HepG2 (cell line): ENCODE measurements at regions of chr4 and their contacts with region 1.

Region 1: DNA sequence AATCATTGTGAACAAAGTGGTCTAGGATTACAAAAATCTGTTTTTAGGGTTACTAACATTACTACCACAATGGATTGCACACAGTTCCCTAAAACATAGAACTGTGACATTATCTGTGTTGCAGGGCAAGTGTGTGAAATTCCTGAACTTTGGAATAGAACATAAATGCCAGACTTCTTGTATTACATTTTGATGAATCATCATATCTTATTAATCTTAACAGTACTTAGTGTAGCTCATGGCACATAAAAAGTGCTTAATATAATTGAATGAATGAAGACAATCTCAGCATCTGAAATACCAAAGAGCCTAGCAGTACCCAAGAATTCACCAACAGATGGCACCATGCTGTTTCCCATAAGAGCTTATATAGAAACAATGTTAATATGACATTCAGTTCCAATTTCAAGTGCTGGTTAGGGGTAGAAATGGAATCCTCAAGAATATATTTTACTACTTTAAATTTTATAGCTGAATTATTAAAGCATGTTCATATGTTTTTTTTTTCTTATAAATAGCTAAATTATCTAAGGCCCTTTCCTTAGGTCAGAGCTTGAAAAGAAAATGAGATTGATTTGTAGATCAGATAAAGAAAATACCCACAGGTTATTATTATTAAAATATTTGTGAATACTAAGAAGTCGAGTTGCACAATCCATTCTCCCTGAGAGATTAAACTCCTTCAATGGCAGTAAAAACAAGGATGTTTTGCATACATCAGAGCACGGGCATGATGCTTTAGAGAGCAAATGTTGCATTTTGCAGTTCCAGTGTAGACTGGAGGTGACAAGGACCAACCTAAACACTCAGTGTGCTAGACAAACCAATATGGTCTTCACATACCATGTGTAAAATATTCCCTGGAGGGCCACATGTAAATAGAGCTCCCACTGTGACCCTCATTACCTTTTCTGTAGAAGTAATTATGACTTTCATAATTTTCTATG is 25.7 kb upstream of the SHISA3 start:
- DNase-seq: peak; percentile 19
- ATAC-seq: peak; percentile 52; the same call in 1 of the 3 replicates
- H3K4me3 ChIP-seq: no peak overlapping the region
- H3K27ac ChIP-seq: no peak overlapping the region
- H3K4me1 ChIP-seq: no peaks in the 10 kb centered on the region
- H3K27me3 ChIP-seq: no peaks in the 10 kb centered on the region
- CTCF ChIP-seq: peak; percentile 45
- EP300 ChIP-seq: no peak
- POLR2A ChIP-seq: no peak
- RAD21 ChIP-seq: no peak

Region 2: GRCh38 chr4:42865572-42866189 is 494.1 kb after region 1 on chr4:
- CTCF ChIA-PET with region 1: no interaction called
- POLR2A ChIA-PET with region 1: no interaction called
- in situ Hi-C with region 1: no loop called
- intact Hi-C with region 1: loop called (anchors 1 kb)
- DNase-seq: peak; percentile 48
- ATAC-seq: peak; percentile 68
- H3K4me3 ChIP-seq: no peak overlapping the region
- H3K27ac ChIP-seq: no peak overlapping the region
- H3K4me1 ChIP-seq: no peaks in the 10 kb centered on the region
- H3K27me3 ChIP-seq: no peaks in the 10 kb centered on the region; a peak in 1 of 5 replicates
- CTCF ChIP-seq: peak; percentile 71
- EP300 ChIP-seq: no peak
- POLR2A ChIP-seq: no peak
- RAD21 ChIP-seq: no peak